Left lung (tissue), 14 donors: ENCODE measurements at regions of chr2 and their contacts with region 1.

Region 1: GRCh38 chr2:12716282-12717190 is at the start of gene TRIB2:
- DNase-seq: peak; percentile 79 to 93 (median 88)
- ATAC-seq: peak; percentile 84
- H3K4me3 ChIP-seq: peak within 1 kb of the TSS; percentile 59 to 83
- H3K27ac ChIP-seq: peak within 1 kb of the TSS; percentile 89 to 91
- H3K4me1 ChIP-seq: peaks cover 6 to 29% of the 10 kb centered on the region in 2 donors
- H3K27me3 ChIP-seq: peaks cover 0 to 54% of the 10 kb centered on the region in 2 donors
- CTCF ChIP-seq: no peak
- polyA plus RNA-seq, gene TRIB2: 58.1 to 88.5 (median 79.4) TPM

Region 2: DNA sequence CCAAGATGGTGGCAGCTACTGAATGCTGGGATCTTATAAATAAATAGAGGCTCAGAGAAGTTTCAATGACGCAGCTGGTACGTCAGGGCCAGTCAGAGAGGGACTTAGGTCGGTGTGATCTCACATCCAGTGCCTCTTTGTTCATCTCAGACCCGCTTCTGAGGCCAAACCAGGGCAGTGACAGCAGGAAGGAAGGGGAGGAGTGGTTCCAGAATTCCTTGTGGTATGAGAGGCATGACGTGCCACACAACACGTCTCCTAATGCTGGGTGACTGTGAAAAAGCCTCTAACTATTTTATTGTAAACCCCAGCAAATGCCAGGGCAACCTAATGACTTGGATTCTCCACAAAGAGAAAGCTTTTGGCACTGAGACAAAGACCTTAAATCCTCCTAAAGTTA is 546.8 kb before region 1 on chr2:
- intact Hi-C with region 1: loop called in 1 of 2 experiments (anchors 5 kb)
- DNase-seq: peak in 2 of 4 donors; percentile 53 to 60
- ATAC-seq: peak; percentile 73
- H3K4me3 ChIP-seq: no peak overlapping the region
- H3K27ac ChIP-seq: peak overlapping the region; percentile 57 to 59
- H3K4me1 ChIP-seq: peaks cover 6 to 25% of the 10 kb centered on the region in 2 donors
- H3K27me3 ChIP-seq: no peaks in the 10 kb centered on the region
- CTCF ChIP-seq: no peak

Region 3: GRCh38 chr2:12881951-12882350 is 165.4 kb after region 1 on chr2:
- intact Hi-C with region 1: no loop called
- DNase-seq: no peak
- ATAC-seq: no peak
- H3K4me3 ChIP-seq: no peak overlapping the region
- H3K27ac ChIP-seq: no peak overlapping the region
- H3K4me1 ChIP-seq: peaks cover 8 to 9% of the 10 kb centered on the region in 2 donors
- H3K27me3 ChIP-seq: no peaks in the 10 kb centered on the region
- CTCF ChIP-seq: no peak